A673 (cell line): ENCODE measurements at regions of chr9 and their contacts with region 1.

Region 1: DNA sequence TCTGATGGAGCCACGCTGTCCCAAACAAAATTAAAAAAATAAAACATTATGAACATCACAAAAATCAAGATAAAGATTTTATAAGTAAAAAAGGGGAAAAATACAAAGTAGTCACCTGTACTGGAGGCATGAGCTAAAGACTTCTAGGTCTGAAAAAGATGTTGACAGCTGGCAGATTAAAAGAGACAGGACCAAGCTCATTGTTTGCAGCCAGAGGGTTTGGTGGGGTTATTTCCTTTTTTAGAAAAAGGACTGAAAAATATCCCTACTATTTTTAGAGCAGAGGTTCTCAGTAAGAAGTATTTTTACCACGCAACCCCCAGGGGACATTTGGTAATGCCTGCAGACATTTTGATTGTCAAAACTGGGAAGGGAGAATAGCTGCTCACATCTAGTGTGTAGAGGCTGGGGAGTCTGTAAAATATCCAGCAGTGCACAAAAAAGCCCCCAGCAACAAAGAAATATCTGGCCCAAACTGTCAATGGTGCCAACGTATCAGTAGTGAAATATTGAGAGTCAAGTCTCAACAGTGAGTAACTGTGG is 353.4 kb downstream of the TLE1 start:
- DNase-seq: no peak
- H3K4me3 ChIP-seq: no peak overlapping the region
- H3K27ac ChIP-seq: no peak overlapping the region
- H3K4me1 ChIP-seq: no peaks in the 10 kb centered on the region
- H3K27me3 ChIP-seq: no peaks in the 10 kb centered on the region
- CTCF ChIP-seq: no peak

Region 2: GRCh38 chr9:81266674-81267073 is 69.3 kb before region 1 on chr9:
- CTCF ChIA-PET with region 1: no interaction called
- POLR2A ChIA-PET with region 1: no interaction called
- intact Hi-C with region 1: loop called (anchors 10 kb)
- DNase-seq: no peak
- H3K4me3 ChIP-seq: no peak overlapping the region
- H3K27ac ChIP-seq: no peak overlapping the region
- H3K4me1 ChIP-seq: no peaks in the 10 kb centered on the region
- H3K27me3 ChIP-seq: no peaks in the 10 kb centered on the region
- CTCF ChIP-seq: no peak

Region 3: GRCh38 chr9:81492710-81493447 is 156.9 kb after region 1 on chr9:
- CTCF ChIA-PET with region 1: no interaction called
- POLR2A ChIA-PET with region 1: no interaction called
- intact Hi-C with region 1: no loop called
- DNase-seq: no peak
- H3K4me3 ChIP-seq: no peak overlapping the region
- H3K27ac ChIP-seq: no peak overlapping the region
- H3K4me1 ChIP-seq: no peaks in the 10 kb centered on the region
- H3K27me3 ChIP-seq: no peaks in the 10 kb centered on the region
- CTCF ChIP-seq: no peak